ENCODE measurements at regions of chr1 and their contacts with region 1.

Region 1: GRCh38 chr1:1013105-1013921 is at the start of gene ISG15:
- DNase-seq: peak; percentile 85
- H3K4me3 Mint-ChIP-seq: peak within 1 kb of the TSS; percentile 91
- H3K27ac Mint-ChIP-seq: peak within 1 kb of the TSS; percentile 94
- H3K4me1 Mint-ChIP-seq: peaks cover 9% of the 10 kb centered on the region
- H3K27me3 Mint-ChIP-seq: no peaks in the 10 kb centered on the region
- CTCF ChIP-seq: no peak
- total RNA-seq, gene ISG15: 7.4 and 8.8 TPM in 2 replicates

Region 2: DNA sequence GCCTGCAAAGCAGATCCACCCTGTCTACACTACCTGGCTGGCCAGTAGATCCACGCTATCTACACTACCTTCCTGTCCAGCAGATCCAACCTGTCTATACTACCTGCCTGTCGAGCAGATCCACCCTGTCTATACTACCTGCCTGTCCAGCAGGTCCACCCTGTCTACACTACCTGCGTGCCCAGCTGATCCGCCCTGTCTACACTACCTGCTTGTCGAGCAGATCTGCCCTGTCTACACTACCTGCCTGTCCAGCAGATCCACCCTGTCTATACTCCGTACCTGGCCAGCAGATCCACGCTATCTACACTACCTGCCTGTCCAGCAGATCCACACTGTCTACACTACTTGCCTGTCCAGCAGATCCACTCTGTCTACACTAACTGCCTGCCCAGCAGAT is 192.4 kb before region 1 on chr1:
- CTCF ChIA-PET with region 1: no interaction called
- POLR2A ChIA-PET with region 1: no interaction called
- intact Hi-C with region 1: no loop called
- DNase-seq: no peak
- H3K4me3 Mint-ChIP-seq: no peak overlapping the region
- H3K27ac Mint-ChIP-seq: no peak overlapping the region
- H3K4me1 Mint-ChIP-seq: peaks cover 19% of the 10 kb centered on the region
- H3K27me3 Mint-ChIP-seq: no peaks in the 10 kb centered on the region
- CTCF ChIP-seq: no peak

Region 3: DNA sequence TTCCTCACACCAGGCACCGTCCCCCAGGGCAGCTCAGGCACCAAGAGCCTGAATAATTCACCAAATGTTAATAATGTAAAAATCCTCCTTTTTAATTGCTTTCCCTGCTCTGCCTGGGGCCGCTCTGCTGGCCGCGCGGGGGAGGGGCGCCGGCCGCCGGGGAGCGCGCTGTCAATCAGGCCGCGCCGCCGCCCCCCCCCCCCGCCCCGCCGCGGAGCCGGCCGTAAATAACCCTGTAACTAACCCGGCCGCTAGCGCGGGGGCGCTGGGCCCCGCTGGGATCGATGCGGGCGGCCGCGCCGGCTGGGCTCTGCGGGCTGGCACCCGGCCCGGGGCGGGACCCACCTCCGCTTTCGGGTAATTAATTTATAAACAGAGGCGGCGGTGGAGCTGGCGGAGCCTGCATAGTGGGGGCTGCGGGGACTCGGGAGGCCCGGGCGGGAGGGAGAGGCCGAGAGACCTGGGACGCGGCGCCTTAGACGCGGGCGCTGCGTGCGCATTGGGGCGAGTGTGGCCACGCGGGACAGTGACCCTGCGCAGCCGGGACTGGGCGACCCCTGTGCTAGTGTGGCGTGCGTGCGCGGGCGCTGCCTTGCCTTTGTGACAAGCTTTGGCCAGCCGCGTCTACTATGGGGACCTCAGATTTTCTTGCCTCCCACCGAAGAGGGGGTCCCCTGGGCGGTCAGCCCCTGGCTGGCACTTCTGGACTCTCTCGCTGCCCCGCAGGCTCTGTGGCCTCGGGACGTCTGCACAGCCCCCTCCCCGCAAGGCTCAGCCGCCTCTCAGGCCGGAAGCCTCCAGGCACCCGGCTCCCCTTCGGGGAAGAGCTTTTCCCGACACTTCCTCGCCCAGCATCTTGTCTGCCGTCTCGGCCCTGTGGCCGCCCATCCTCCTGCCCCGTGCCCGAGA is 73.0 kb before region 1 on chr1:
- CTCF ChIA-PET with region 1: no interaction called
- POLR2A ChIA-PET with region 1: no interaction called
- intact Hi-C with region 1: no loop called
- DNase-seq: peak; percentile 60
- H3K4me3 Mint-ChIP-seq: peak overlapping the region; percentile 60
- H3K27ac Mint-ChIP-seq: no peak overlapping the region
- H3K4me1 Mint-ChIP-seq: no peaks in the 10 kb centered on the region
- H3K27me3 Mint-ChIP-seq: peaks cover 7% of the 10 kb centered on the region
- CTCF ChIP-seq: no peak

Region 4: GRCh38 chr1:999725-1000356 is 13.5 kb before region 1 on chr1 and contains the start of gene HES4:
- CTCF ChIA-PET with region 1: interaction called, 18 read pairs
- POLR2A ChIA-PET with region 1: interaction called, 6 read pairs
- intact Hi-C with region 1: no loop called
- DNase-seq: peak; percentile 92
- H3K4me3 Mint-ChIP-seq: peak within 1 kb of the TSS; percentile 82
- H3K27ac Mint-ChIP-seq: peak within 1 kb of the TSS; percentile 94
- H3K4me1 Mint-ChIP-seq: peaks cover 13% of the 10 kb centered on the region
- H3K27me3 Mint-ChIP-seq: no peaks in the 10 kb centered on the region
- CTCF ChIP-seq: no peak
- total RNA-seq, gene HES4: 42.1 and 42.6 TPM in 2 replicates